ENCODE measurements at regions of chr17 and their contacts with region 1.

Region 1: GRCh38 chr17:49997791-49998703 is 3.0 kb upstream of the DLX3 start:
- DNase-seq: peak; percentile 92 to 95
- ATAC-seq: peak; percentile 73 to 88
- H3K4me3 ChIP-seq: no peak overlapping the region
- H3K27ac ChIP-seq: peak overlapping the region; percentile 54 to 71
- H3K4me1 ChIP-seq: peaks cover 29% of the 10 kb centered on the region
- CTCF ChIP-seq: peak; percentile 99
- EP300 ChIP-seq: no peak
- POLR2A ChIP-seq: no peak
- RAD21 ChIP-seq: peak; percentile 99

Region 2: DNA sequence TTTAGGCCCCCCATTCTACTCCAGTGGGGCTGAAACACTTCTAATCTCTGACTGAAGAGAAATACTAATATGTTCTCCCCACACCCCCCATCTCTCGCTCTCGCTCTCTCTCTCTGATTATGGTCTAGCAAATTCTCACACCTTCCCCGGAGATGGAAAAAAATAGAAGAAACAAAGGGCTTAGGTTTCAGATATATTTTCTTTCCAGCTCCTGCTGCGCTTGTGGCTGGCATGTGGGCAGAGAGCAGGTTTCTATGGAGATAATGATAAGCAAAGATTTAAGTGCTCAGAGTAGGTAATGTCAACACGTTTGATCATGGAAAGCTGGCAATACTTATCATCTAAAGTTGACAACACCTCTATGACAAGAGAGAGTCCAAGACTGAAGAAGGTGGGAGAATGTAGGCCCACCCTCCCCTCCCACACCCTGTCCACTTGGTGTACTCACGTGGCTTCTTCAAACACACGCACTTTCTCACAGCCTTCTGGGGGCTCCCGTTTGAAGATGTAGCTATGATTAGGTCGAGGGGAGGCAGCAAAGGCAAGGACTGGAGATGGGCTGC is 282.2 kb before region 1 on chr17:
- CTCF ChIA-PET with region 1: interaction called, 50 read pairs
- POLR2A ChIA-PET with region 1: no interaction called
- DNase-seq: no peak
- ATAC-seq: no peak
- H3K4me3 ChIP-seq: no peak overlapping the region
- H3K27ac ChIP-seq: no peak overlapping the region
- H3K4me1 ChIP-seq: no peaks in the 10 kb centered on the region
- CTCF ChIP-seq: no peak
- EP300 ChIP-seq: no peak
- POLR2A ChIP-seq: no peak
- RAD21 ChIP-seq: no peak

Region 3: DNA sequence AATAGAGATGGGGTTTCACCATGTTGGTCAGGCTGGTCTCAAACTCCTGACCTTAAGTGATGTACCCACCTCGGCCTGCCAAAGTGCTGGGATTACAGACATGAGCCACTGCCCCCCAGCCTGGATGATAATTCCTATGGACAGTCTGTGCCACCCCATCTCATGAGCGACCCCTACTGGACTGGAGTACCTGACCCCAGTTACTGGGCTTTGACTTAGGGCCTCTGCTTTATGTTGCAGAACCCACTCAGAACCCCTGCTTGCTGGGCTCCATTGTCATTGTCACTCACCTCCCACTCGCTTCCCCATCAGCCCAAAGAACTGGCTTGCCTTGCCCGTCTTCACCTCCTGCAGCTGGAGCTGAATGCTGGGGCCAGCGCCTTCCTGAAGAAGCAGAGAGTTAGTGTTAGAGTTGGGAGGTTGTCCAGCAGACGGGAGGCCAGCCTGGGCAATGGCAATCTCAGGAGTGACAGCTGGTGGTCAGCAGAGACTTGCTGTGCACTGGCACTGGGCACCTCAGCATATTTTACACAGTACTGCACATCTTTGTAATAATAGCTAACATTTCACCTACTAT is 154.2 kb before region 1 on chr17:
- CTCF ChIA-PET with region 1: interaction called, 1,602 read pairs
- POLR2A ChIA-PET with region 1: no interaction called
- DNase-seq: peak; percentile 52 to 69
- ATAC-seq: peak in 1 of 2 experiments; percentile 74; a peak in 3 of 6 replicates
- H3K4me3 ChIP-seq: no peak overlapping the region
- H3K27ac ChIP-seq: no peak overlapping the region
- H3K4me1 ChIP-seq: peaks cover 7% of the 10 kb centered on the region; the same call in 1 of the 3 replicates
- CTCF ChIP-seq: peak; percentile 46
- EP300 ChIP-seq: no peak
- POLR2A ChIP-seq: no peak
- RAD21 ChIP-seq: peak; percentile 35 to 52; a peak in 3 of 5 replicates

Region 4: DNA sequence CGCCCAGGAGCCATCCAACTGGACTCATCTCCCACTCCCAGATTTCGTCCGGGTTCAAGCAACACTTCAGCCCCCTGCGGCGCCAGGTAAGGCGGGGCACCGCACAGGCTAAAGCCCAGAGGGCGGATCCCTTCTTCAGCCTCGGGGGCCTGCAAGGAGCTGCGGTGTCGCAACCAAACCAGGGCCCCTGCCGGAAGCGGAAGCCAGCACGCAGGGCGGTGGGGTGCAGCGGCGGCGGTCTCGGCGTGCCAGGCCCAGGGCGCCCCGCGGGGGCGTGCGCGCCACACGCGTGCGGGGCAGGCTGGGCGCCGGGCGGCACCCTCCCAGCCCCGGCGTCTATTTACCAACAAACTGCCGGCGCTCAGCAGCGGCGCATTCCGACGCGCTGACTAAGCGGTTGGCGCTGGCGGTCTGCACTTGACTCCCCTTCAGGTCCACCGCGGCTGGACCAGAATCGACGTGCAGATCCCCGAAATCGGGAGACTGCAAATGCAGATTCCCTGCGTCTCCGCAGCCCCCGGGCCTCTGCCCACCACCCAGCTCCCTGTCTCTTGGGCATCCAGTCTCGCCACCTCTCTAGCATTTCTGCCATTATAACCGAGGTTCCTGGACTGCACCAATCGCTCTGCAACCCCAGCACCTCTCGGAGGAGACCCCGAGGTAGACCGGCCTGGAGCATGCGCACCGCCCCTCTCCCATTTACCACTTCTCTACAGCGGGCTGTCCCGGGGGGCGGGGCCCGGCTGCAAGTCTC is 29.5 kb before region 1 on chr17:
- CTCF ChIA-PET with region 1: interaction called, 365 read pairs
- POLR2A ChIA-PET with region 1: interaction called, 5 read pairs
- DNase-seq: peak; percentile 86 to 95
- ATAC-seq: peak; percentile 83 to 92
- H3K4me3 ChIP-seq: peak overlapping the region; percentile 69
- H3K27ac ChIP-seq: peak overlapping the region; percentile 82 to 92
- H3K4me1 ChIP-seq: peaks cover 12% of the 10 kb centered on the region; the same call in 2 of the 3 replicates
- CTCF ChIP-seq: no peak
- EP300 ChIP-seq: no peak
- POLR2A ChIP-seq: peak; percentile 70
- RAD21 ChIP-seq: 0 out of 5 replicates have a peak, but pooled peaks of 1 of the 2 experiments have one; percentile 20

Region 5: DNA sequence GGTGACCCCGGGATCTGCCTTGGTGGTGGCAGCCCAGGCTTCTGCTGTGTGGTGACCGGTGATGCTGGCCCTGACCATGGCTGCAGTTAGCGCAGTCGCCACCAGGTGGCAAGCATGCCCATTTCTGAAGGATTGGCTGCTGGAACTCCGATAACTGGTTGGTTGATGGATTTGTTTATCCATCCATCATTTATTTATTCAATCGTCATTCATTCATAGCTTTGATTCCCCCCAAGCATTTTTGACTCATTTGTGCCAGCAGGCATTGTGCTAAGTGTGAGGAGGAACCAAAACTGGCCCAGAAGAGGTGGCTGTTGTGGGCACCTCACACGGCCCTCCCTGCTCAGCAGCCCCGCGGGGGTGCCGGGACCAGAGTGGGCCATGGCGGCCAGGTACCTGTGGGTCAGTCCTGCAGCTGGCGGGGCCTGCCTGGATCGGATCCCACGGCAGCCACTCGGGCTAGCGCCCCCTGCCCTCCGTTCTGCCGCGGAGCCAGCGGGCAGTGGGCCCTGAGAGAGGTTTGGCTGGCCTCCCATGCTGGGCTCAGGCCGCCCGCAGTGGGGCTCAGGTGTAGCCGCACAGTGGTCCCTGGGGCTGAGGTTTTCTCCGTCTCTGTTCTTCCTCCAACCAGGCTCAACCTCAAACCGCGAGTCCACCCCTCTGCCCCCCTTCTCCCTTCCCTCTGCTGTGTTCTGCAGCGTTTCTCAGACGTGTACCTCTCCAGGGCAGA is 29.0 kb after region 1 on chr17:
- CTCF ChIA-PET with region 1: interaction called, 69 read pairs
- POLR2A ChIA-PET with region 1: no interaction called
- DNase-seq: peak; percentile 91 to 95
- ATAC-seq: peak; percentile 48 to 76
- H3K4me3 ChIP-seq: peak overlapping the region; percentile 46
- H3K27ac ChIP-seq: peak overlapping the region; percentile 94 to 99
- H3K4me1 ChIP-seq: peaks cover 42% of the 10 kb centered on the region
- CTCF ChIP-seq: peak; percentile 97
- EP300 ChIP-seq: no peak
- POLR2A ChIP-seq: no peak
- RAD21 ChIP-seq: peak; percentile 98

Region 6: DNA sequence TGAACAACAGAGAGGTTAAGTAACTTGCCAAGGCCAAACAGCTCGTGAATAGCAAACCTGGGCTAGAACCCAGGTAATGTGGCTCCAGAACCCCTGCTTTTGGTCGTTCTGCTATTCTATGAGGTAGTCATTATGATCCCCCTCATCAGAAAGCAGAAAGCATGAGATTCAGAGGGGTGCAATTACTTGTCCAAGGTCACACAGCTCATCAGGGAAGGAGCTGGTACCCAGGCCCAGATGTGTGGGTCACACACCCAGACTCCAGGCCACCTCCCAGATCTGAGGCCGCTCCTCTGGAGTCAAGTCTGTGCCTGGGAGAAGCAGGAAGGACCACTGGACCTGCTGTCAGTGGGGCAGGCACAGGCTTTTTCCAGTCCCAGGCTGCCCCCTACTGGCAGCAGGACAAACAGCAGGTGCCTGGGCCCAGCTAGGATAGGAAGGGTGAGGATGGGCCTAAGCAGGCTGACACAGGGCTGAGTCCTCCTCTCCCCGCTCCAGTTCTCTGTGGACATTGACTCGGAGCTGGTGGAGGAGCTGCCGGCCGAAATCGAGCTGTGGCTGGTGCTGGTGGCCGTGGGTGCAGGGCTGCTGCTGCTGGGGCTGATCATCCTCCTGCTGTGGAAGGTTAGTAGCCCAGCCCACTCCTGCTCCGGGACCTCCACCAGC is 89.3 kb after region 1 on chr17:
- CTCF ChIA-PET with region 1: interaction called, 80 read pairs
- POLR2A ChIA-PET with region 1: interaction called, 3 read pairs
- DNase-seq: peak; percentile 87 to 93
- ATAC-seq: peak; percentile 76 to 93
- H3K4me3 ChIP-seq: no peak overlapping the region
- H3K27ac ChIP-seq: peak overlapping the region in 1 of 2 experiments; percentile 37; a peak in 2 of 6 replicates
- H3K4me1 ChIP-seq: no peaks in the 10 kb centered on the region
- CTCF ChIP-seq: peak; percentile 97
- EP300 ChIP-seq: no peak
- POLR2A ChIP-seq: no peak
- RAD21 ChIP-seq: peak; percentile 97 to 99